ENCODE measurements at regions of chr11 and their contacts with region 1.

Region 1: GRCh38 chr11:13343931-13344717 is 66.5 kb downstream of the BMAL1 start:
- DNase-seq: peak in 1 of 2 donors; percentile 68
- H3K4me3 ChIP-seq: no peak overlapping the region
- CTCF ChIP-seq: peak in 2 of 3 donors; percentile 20 to 22
- POLR2A ChIP-seq: no peak

Region 2: GRCh38 chr11:12989428-12990161 is 354.5 kb before region 1 on chr11:
- intact Hi-C with region 1: no loop called
- DNase-seq: no peak
- H3K4me3 ChIP-seq: no peak overlapping the region
- CTCF ChIP-seq: no peak
- POLR2A ChIP-seq: no peak

Region 3: DNA sequence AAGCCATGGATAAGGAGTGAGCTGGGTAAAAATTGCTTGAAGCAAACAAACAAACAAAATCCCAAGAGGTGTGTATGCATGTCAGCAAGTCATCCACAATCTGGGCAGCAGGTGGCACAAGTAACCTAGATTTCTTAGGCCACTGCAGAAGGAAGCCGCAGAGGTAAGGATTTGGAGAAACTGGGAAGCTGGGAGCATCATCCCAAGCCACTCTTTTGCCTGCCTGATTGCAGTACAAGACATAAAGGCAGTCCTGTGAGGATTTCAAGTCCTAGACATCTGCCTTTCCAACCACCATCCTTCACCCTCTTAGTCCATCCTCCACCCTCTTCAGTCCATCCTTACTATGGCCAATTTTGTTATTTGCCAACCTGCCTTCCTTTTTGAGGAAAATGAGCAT is 133.7 kb before region 1 on chr11:
- intact Hi-C with region 1: loop called (anchors 5 kb)
- DNase-seq: peak in 1 of 2 donors; percentile 66
- H3K4me3 ChIP-seq: no peak overlapping the region
- CTCF ChIP-seq: peak in 1 of 3 donors; percentile 54
- POLR2A ChIP-seq: no peak

Measured in lower leg skin (tissue), 4 donors.